ENCODE measurements at regions of chr11 and their contacts with region 1.

Region 1: GRCh38 chr11:59822989-59823566 is 12.5 kb upstream of the MRPL16 start:
- DNase-seq: no peak
- ATAC-seq: peak; percentile 98
- H3K4me3 ChIP-seq: no peak overlapping the region
- H3K27ac ChIP-seq: no peak overlapping the region
- H3K4me1 ChIP-seq: peaks cover 5% of the 10 kb centered on the region; the same call in 1 of the 2 replicates
- H3K27me3 ChIP-seq: no peaks in the 10 kb centered on the region
- CTCF ChIP-seq: peak; percentile 48 to 72 (median 61); a peak in 5 of 6 replicates
- EP300 ChIP-seq: no peak
- POLR2A ChIP-seq: no peak
- RAD21 ChIP-seq: peak; percentile 81

Region 2: DNA sequence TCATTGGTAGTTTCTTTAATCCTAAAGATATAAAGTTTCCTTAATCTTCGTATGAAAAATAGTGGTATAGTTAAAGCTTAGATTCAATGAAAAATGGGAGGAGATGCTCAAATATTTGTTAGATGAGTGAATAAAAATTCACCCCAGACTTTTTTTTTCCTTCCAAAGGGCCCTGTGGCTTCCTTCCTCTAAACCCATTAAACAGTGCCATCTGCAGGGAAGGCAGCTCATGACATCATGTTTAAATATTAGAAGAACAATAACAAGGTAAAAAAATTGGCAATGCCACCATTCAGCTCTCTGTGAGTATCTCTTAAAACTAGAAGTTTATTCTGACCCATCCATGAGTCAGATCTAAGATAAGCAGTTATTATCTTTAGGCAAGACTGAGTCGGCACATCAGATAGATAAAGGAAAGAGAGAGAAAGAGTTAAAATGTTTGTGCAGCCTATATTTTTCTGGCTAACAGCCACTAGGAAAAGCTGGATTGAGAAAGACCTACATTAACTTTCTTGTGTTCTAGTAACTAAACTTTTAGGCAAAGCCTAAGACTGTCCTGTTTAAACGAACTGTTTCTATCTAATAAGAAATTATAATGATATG is 96.0 kb after region 1 on chr11:
- CTCF ChIA-PET with region 1: interaction called, 5 read pairs
- POLR2A ChIA-PET with region 1: no interaction called
- RAD21 ChIA-PET with region 1: interaction called, 4 read pairs
- SMC1A ChIA-PET with region 1: interaction called, 6 read pairs
- in situ Hi-C with region 1: no loop called
- intact Hi-C with region 1: loop called (anchors 1 kb)
- DNase-seq: no peak
- ATAC-seq: peak; percentile 41; the same call in 1 of the 3 replicates
- H3K4me3 ChIP-seq: no peak overlapping the region
- H3K27ac ChIP-seq: no peak overlapping the region
- H3K4me1 ChIP-seq: no peaks in the 10 kb centered on the region
- H3K27me3 ChIP-seq: no peaks in the 10 kb centered on the region
- CTCF ChIP-seq: peak; percentile 33 to 45 (median 37); a peak in 4 of 6 replicates
- EP300 ChIP-seq: no peak
- POLR2A ChIP-seq: no peak
- RAD21 ChIP-seq: peak; percentile 59

Region 3: GRCh38 chr11:60130496-60130895 is 307.4 kb after region 1 on chr11:
- CTCF ChIA-PET with region 1: no interaction called
- POLR2A ChIA-PET with region 1: no interaction called
- RAD21 ChIA-PET with region 1: no interaction called
- SMC1A ChIA-PET with region 1: no interaction called
- in situ Hi-C with region 1: no loop called
- intact Hi-C with region 1: loop called (anchors 1 kb)
- DNase-seq: no peak
- ATAC-seq: peak; percentile 83
- H3K4me3 ChIP-seq: no peak overlapping the region
- H3K27ac ChIP-seq: no peak overlapping the region
- H3K4me1 ChIP-seq: no peaks in the 10 kb centered on the region
- H3K27me3 ChIP-seq: no peaks in the 10 kb centered on the region
- CTCF ChIP-seq: peak; percentile 33 to 37 (median 36); a peak in 3 of 6 replicates
- EP300 ChIP-seq: no peak
- POLR2A ChIP-seq: no peak
- RAD21 ChIP-seq: peak; percentile 60

Region 4: DNA sequence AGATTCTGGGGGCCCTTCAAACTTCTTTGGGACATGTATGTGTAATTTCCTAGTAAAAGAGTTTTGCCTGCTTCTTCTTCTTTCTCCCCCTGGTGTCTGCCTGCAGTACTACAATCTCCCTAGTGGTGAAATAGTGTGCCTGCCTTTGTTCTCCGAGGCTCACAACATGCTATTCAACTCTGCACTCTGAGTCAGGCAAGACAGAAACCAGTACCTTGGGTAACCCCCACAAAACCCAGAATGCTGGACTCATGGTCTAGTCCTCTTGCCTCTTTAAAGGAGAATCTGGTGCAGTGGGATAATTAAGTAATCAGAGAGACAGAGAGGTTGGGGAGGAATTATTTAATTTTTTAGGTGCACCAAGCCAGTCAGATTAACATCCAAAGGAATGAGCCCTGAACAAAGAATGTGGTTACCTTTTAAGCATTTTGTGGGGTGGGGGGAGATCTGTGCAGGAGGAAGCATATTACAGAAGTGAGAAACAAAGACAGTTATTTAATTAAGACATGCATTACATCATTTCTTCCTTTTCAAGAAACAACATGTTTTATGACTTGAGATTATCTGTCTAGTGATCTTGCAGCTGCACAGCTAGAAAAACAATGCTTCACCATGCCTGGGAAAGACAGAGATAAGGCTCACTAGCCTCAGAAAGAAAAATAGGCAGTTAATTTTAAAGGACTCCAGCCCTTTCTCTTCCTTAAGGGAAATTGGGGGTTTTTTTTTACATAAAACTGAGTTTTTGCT is 370.8 kb after region 1 on chr11:
- CTCF ChIA-PET with region 1: no interaction called
- POLR2A ChIA-PET with region 1: no interaction called
- RAD21 ChIA-PET with region 1: no interaction called
- SMC1A ChIA-PET with region 1: no interaction called
- in situ Hi-C with region 1: no loop called
- intact Hi-C with region 1: loop called (anchors 1 kb)
- DNase-seq: peak; percentile 80
- ATAC-seq: peak; percentile 99
- H3K4me3 ChIP-seq: 0 out of 2 replicates have a peak overlapping the region, but pooled peaks have one; percentile 28
- H3K27ac ChIP-seq: peak overlapping the region; percentile 70
- H3K4me1 ChIP-seq: peaks cover 24% of the 10 kb centered on the region
- H3K27me3 ChIP-seq: no peaks in the 10 kb centered on the region
- CTCF ChIP-seq: peak; percentile 82 to 96 (median 94)
- EP300 ChIP-seq: peak; percentile 40 to 47; a peak in 2 of 4 replicates
- POLR2A ChIP-seq: no peak
- RAD21 ChIP-seq: peak; percentile 76

Region 5: GRCh38 chr11:60257956-60258722 is 435.1 kb after region 1 on chr11:
- CTCF ChIA-PET with region 1: interaction called, 37 read pairs
- POLR2A ChIA-PET with region 1: no interaction called
- RAD21 ChIA-PET with region 1: no interaction called
- SMC1A ChIA-PET with region 1: no interaction called
- in situ Hi-C with region 1: loop called (anchors 5 kb)
- intact Hi-C with region 1: no loop called
- DNase-seq: no peak
- ATAC-seq: no peak
- H3K4me3 ChIP-seq: no peak overlapping the region
- H3K27ac ChIP-seq: no peak overlapping the region
- H3K4me1 ChIP-seq: no peaks in the 10 kb centered on the region
- H3K27me3 ChIP-seq: no peaks in the 10 kb centered on the region
- CTCF ChIP-seq: no peak
- EP300 ChIP-seq: no peak
- POLR2A ChIP-seq: no peak
- RAD21 ChIP-seq: no peak

Measured in GM12878 (cell line).